ENCODE measurements at regions of chr5 and their contacts with region 1.

Region 1: DNA sequence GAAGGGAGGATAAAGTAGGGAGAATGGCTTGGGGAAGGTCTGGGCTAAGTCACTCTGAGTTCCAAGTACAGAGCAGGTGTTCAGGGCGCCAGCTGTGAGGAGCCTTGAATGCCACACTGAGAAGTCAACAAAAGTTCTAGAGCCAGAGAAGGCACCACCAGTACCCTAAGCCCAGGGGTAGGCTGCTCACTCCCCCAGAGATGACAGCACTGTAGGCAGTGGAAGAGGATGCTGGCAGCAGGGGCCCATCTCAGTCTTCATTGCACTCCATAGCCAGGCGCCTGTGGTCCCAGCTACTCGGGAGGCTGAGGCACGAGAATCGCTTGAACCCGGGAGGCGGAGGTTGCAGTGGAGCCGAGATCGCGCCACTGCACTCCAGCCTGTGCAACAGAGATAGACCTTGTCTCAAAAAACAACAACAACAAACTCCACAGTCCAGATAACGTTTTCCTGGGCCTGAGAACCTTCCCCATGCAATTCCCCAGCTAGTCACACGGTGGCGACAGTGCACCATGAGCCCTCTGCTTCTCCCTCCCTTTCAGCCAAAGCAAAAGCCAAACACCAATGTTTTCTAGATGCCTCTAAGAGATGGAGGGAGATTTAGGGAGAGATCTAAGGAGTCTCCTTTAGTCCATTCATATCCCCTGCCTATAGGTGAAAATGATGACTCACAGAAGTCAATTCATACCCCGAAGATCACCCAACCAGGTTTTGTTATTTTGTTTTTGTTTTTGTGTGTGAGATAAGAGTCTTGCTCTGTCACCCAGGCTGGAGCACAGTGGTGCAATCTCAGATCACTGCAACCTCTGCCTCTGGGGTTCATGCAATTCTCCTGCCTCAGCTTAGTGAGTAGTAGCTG is 19.8 kb upstream of the NSD1 start:
- DNase-seq: peak; percentile 83
- ATAC-seq: peak; percentile 78
- H3K4me3 ChIP-seq: no peak overlapping the region
- H3K27ac ChIP-seq: no peak overlapping the region
- H3K4me1 ChIP-seq: no peaks in the 10 kb centered on the region
- H3K27me3 ChIP-seq: no peaks in the 10 kb centered on the region
- CTCF ChIP-seq: peak; percentile 99

Region 2: DNA sequence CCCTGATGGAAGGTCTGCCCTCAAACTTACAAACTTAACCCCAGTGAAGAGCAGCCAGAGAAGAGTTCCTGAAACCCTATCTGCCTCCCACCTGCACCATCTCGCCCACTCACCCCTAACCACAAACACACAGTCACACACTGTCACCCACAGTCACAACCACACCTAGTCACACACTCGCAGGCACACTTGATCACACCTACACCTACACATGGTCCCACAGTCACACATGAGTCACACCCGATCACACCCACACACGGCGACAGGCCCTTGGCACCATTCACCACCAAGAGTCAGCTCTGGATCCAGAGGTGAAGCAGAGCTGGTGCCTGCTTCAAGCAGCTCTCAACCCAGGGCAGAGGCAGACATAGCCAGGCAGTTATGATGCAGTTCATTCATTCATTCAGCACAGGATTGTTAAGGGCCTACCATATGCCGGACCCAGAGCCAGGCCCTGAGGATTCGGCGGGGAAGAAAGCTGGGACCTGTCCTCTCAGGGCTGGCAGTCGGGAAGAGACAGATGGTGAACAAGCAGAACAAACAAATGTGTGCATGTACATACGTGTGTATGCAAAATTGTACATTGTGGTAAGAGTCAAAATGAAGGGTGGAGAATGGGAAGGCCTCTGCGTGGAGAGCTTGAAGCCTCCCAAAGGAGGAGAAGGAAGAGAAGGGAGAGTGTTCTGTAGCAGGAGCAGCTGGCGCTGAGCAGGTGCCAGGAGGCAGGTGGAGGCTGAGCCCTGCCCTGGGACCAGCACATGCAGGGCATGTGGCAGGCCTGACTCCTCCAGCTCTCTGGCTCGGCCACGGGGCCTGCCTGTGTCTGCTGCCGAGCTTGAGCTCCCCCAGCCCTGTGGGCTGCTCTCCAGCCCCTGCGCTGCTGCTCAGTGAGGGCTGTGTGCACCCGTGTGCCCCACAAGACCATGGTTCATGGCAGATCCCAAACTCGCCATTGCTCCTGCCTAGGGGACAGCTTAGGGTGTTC is 460.1 kb before region 1 on chr5:
- CTCF ChIA-PET with region 1: interaction called, 11 read pairs
- POLR2A ChIA-PET with region 1: no interaction called
- in situ Hi-C with region 1: no loop called
- intact Hi-C with region 1: no loop called
- DNase-seq: no peak
- ATAC-seq: no peak
- H3K4me3 ChIP-seq: no peak overlapping the region
- H3K27ac ChIP-seq: no peak overlapping the region
- H3K4me1 ChIP-seq: peaks cover 3% of the 10 kb centered on the region
- H3K27me3 ChIP-seq: no peaks in the 10 kb centered on the region
- CTCF ChIP-seq: no peak

Region 3: DNA sequence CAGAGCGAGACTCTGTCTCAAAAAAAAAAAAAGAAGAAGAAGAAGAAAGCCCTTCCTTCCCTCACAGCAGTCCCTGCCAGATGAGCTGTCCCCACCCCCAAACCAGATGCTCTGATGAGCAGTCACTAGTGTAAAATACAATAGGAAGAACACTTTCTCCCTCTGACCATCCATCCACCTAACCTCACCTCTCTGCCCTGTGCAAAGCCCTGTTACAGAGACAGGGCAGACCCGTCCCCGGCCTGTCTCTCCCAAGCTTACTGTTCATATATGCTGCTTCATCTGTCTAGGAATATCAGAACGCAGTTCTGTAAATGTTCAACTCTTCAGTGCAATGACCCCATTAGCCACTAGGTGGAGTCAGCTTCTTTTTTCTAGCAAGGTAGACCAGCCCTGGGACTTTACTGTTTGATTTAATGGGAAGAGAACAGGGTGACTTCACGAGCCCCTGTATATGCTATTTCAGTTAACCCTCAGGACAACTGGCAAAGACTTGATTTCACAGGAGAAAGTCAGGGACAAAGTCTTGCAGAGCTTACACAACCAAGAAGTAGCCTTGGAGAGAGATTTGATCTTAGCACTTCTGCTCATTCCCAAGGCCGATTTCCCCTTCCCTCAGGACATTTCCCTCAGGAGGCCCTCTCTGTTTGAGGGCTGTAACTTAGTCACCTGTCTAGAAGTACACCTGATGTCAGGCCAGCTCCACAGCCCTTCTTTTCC is 42.0 kb before region 1 on chr5:
- CTCF ChIA-PET with region 1: interaction called, 13 read pairs
- POLR2A ChIA-PET with region 1: no interaction called
- in situ Hi-C with region 1: no loop called
- intact Hi-C with region 1: loop called (anchors 2 kb)
- DNase-seq: peak; percentile 82
- ATAC-seq: peak; percentile 95
- H3K4me3 ChIP-seq: no peak overlapping the region
- H3K27ac ChIP-seq: no peak overlapping the region
- H3K4me1 ChIP-seq: no peaks in the 10 kb centered on the region
- H3K27me3 ChIP-seq: no peaks in the 10 kb centered on the region
- CTCF ChIP-seq: peak; percentile 93

Region 4: GRCh38 chr5:177303121-177303924 is 189.5 kb after region 1 on chr5 and contains the starts of genes PRELID1 and RAB24:
- CTCF ChIA-PET with region 1: interaction called, 3 read pairs
- POLR2A ChIA-PET with region 1: no interaction called
- in situ Hi-C with region 1: no loop called
- intact Hi-C with region 1: loop called (anchors 5 kb)
- DNase-seq: no peak
- ATAC-seq: peak; percentile 77
- H3K4me3 ChIP-seq: peak within 1 kb of the TSS; percentile 81 to 97
- H3K27ac ChIP-seq: peak within 1 kb of the TSS; percentile 94
- H3K4me1 ChIP-seq: peaks cover 34% of the 10 kb centered on the region
- H3K27me3 ChIP-seq: no peaks in the 10 kb centered on the region
- CTCF ChIP-seq: peak; percentile 63
- total RNA-seq, gene PRELID1: 275 TPM
- total RNA-seq, gene RAB24: 37.2 TPM

Region 5: DNA sequence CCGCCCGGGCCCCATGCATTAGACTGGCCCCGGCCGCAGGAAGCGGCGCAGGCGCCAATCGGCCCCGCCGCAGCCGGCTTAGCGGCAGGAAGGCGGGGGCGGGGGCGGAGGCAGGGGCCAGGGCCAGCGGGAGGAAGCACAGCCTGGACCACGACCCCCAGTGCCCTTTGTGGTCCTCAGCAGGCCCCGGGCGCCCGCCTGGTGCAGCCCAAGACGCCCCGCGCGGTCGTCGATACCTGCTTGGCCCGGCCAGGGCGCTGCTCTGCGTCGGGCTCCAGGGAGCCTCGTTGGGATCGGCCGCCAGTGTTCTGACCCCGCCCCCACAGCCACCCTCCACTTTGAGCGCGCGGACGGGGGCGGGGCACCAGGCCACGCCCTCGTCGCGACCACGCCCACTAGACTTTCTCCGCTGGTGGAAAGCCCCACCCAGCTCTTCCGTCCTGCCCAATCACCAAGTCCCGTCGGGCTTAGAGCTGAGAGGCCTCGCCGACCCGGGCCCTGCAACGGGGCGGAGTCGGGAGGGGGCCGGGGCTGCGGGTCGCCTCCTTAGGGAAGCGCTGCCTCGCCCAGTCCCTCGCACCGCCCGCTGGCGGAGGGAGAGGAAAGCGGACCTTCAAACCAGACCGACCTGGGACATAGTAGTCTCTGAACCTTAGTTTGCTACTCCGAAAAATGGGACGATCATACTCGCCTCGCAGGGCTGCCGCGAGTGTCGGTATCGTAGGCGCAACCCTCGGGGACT is 383.7 kb after region 1 on chr5 and contains the start of gene PDLIM7:
- CTCF ChIA-PET with region 1: no interaction called
- POLR2A ChIA-PET with region 1: no interaction called
- in situ Hi-C with region 1: no loop called
- intact Hi-C with region 1: no loop called
- DNase-seq: no peak
- ATAC-seq: peak; percentile 89
- H3K4me3 ChIP-seq: peak within 1 kb of the TSS; percentile 56 to 63
- H3K27ac ChIP-seq: peak within 1 kb of the TSS; percentile 70
- H3K4me1 ChIP-seq: peaks cover 30% of the 10 kb centered on the region
- H3K27me3 ChIP-seq: no peaks in the 10 kb centered on the region
- CTCF ChIP-seq: peak; percentile 6; the same call in 1 of the 2 replicates
- total RNA-seq, gene PDLIM7: 62.9 TPM